CD4-positive, alpha-beta T cell (primary cell): ENCODE measurements at regions of chr10 and their contacts with region 1.

Region 1: GRCh38 chr10:11225935-11226334 is 208.3 kb downstream of the CELF2 start:
- DNase-seq: peak in 12 of 14 experiments; percentile 22 to 85 (median 56)
- ATAC-seq: peak; percentile 72
- H3K4me3 ChIP-seq: peak overlapping the region; percentile 19
- H3K4me3 Mint-ChIP-seq: peak overlapping the region; percentile 47
- H3K27ac ChIP-seq: peak overlapping the region; percentile 74 to 78
- H3K27ac Mint-ChIP-seq: peak overlapping the region; percentile 89
- H3K4me1 ChIP-seq: peaks cover 82% of the 10 kb centered on the region
- H3K4me1 Mint-ChIP-seq: peaks cover 99% of the 10 kb centered on the region
- H3K27me3 ChIP-seq: no peaks in the 10 kb centered on the region
- H3K27me3 Mint-ChIP-seq: no peaks in the 10 kb centered on the region
- CTCF ChIP-seq: no peak

Region 2: DNA sequence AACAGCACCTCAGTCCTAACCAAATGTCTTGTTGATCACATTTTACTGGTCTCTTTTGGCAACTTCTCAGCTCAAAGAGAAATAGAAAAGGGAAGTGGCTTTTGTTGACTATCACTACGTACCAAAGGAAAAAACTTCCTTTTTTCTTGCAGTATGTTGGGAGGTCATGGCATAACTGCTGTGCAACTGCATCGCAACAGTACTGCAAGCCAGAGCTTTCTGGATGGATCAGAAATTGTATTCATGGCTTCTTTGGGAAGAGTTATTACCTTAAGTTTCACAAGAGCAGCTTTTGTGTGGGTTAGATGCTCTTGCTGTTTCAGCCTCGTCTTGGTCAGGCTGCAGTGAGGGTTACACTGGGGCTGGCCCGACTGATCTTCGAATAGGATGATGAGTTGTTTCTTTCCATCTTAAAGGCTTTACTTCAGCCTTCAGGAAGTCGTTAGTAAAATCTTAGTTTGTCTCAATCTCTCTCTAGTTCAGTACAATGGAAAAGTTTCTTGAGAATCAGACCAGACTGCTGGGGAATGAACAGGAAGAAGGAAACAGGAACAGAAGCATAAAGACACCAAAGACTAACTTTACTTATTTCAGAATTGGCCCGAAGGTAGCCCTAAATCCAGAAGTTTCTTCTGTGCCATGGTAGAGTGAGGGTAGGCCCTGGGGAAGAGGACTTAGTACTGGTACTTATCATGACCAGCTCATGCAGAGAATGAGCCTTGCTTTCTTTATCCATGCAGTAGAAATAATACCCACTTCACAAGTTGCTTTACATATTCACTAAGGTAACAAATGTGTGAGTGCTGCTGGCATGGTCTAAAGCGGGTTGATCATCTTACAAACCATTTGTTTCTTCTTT is 54.7 kb before region 1 on chr10:
- CTCF ChIA-PET with region 1: interaction called, 3 read pairs
- POLR2A ChIA-PET with region 1: interaction called, 22 read pairs
- intact Hi-C with region 1: loop called in 1 of 2 experiments (anchors 5 kb)
- DNase-seq: peak in 2 of 14 experiments; percentile 45 to 64
- ATAC-seq: no peak
- H3K4me3 ChIP-seq: peak overlapping the region; percentile 87
- H3K4me3 Mint-ChIP-seq: no peak overlapping the region
- H3K27ac ChIP-seq: peak overlapping the region; percentile 84 to 96
- H3K27ac Mint-ChIP-seq: no peak overlapping the region
- H3K4me1 ChIP-seq: peaks cover 68% of the 10 kb centered on the region
- H3K4me1 Mint-ChIP-seq: peaks cover 2% of the 10 kb centered on the region
- H3K27me3 ChIP-seq: no peaks in the 10 kb centered on the region
- H3K27me3 Mint-ChIP-seq: no peaks in the 10 kb centered on the region
- CTCF ChIP-seq: no peak

Region 3: DNA sequence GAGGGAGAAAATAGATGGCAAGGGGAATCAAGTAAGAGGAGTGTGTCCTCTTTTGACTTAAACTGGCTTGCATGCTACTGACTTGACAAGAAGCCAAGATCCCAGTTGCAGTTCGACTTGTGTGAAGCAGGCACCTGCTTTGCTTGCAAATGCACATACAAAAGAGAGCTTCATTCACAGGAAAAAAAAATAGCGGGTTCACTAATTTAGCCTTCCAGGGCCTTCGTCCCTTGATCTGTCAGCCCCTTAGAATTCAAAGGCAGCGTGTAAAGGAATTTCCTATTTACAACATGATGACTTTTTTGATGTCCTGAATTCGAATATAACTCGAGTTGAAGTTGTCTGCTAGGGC is 16.1 kb before region 1 on chr10:
- CTCF ChIA-PET with region 1: interaction called, 4 read pairs
- POLR2A ChIA-PET with region 1: interaction called, 13 read pairs
- intact Hi-C with region 1: loop called in 1 of 2 experiments (anchors 2 kb)
- DNase-seq: peak in 2 of 14 experiments; percentile 51 to 58
- ATAC-seq: peak; percentile 11
- H3K4me3 ChIP-seq: peak overlapping the region; percentile 22
- H3K4me3 Mint-ChIP-seq: peak overlapping the region; percentile 82
- H3K27ac ChIP-seq: peak overlapping the region; percentile 43 to 60
- H3K27ac Mint-ChIP-seq: peak overlapping the region; percentile 81
- H3K4me1 ChIP-seq: peaks cover 84% of the 10 kb centered on the region
- H3K4me1 Mint-ChIP-seq: peaks cover 98% of the 10 kb centered on the region
- H3K27me3 ChIP-seq: no peaks in the 10 kb centered on the region
- H3K27me3 Mint-ChIP-seq: no peaks in the 10 kb centered on the region
- CTCF ChIP-seq: no peak

Region 4: DNA sequence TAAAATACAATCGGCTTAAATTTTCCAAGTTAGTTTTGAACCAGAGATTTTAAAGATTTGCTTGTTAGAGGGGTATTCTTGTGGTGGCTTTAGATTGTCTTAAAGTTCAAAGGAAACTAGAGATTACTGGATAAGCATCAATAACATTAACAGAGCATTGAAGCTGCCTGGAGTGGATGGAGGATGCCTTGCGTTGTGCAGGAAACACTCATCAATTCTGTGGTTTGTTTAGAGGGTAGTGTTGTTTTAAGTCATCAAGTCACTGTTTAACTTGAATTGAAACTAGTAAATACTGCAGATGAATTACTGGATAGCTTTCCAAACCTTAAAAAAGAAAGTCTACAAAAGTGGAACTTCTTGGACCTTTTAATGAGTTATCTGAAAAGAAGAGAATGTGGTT is 10.3 kb after region 1 on chr10:
- CTCF ChIA-PET with region 1: interaction called, 14 read pairs
- POLR2A ChIA-PET with region 1: interaction called, 27 read pairs
- intact Hi-C with region 1: loop called in 1 of 2 experiments (anchors 1 kb)
- DNase-seq: peak in 5 of 14 experiments; percentile 23 to 71 (median 61)
- ATAC-seq: peak; percentile 76
- H3K4me3 ChIP-seq: no peak overlapping the region
- H3K4me3 Mint-ChIP-seq: peak overlapping the region; percentile 51
- H3K27ac ChIP-seq: peak overlapping the region; percentile 43 to 47
- H3K27ac Mint-ChIP-seq: no peak overlapping the region
- H3K4me1 ChIP-seq: peaks cover 63% of the 10 kb centered on the region
- H3K4me1 Mint-ChIP-seq: peaks cover 68% of the 10 kb centered on the region
- H3K27me3 ChIP-seq: no peaks in the 10 kb centered on the region
- H3K27me3 Mint-ChIP-seq: no peaks in the 10 kb centered on the region
- CTCF ChIP-seq: no peak

Region 5: DNA sequence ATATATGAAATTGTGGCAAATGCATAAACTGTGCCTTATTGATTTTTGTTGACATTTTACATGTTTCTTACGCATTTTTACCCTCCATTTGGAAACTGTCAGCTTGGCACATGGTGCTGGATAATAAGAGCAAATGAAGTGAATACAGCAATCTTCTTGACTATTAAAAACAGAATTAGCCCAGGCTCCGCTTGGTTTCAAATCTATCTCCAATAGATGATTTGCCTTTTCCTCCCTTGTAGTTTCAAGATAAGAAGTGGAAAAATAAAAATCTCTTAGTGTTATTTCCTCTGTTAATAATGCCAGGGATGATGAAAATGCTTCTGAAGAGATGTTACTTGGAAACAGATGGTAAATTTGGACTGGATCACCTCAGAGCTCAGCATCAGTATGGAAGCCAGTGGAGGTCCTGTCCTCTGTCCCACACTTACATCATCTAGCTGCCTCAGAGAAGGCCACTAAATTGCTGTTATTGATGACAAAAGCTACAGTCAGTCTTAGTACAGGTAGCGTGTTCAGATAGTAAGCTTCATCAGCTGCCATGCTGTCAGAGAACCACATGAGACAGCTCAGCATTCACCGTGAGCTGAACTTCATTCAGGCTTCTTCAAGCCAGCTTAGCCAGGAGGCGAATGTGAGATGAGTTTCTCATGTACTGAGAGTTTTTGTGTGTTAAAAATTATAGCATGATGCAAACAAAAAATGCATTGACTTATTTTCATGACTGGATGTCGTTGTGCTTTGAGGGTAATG is 38.5 kb after region 1 on chr10:
- CTCF ChIA-PET with region 1: interaction called, 3 read pairs
- POLR2A ChIA-PET with region 1: interaction called, 4 read pairs
- intact Hi-C with region 1: loop called in 1 of 2 experiments (anchors 5 kb)
- DNase-seq: no peak
- ATAC-seq: no peak
- H3K4me3 ChIP-seq: no peak overlapping the region
- H3K4me3 Mint-ChIP-seq: no peak overlapping the region
- H3K27ac ChIP-seq: no peak overlapping the region
- H3K27ac Mint-ChIP-seq: peak overlapping the region; percentile 93
- H3K4me1 ChIP-seq: peaks cover 24% of the 10 kb centered on the region
- H3K4me1 Mint-ChIP-seq: peaks cover 95% of the 10 kb centered on the region
- H3K27me3 ChIP-seq: no peaks in the 10 kb centered on the region
- H3K27me3 Mint-ChIP-seq: no peaks in the 10 kb centered on the region
- CTCF ChIP-seq: no peak